Activated CD4-positive, alpha-beta T cell treated with anti-CD3 and anti-CD28 coated beads, Interleukin-2, amount 10 ng/mL, durations not matched to agents 24 days and 14 days (primary cell): ENCODE measurements at regions of chr9 and their contacts with region 1.

Region 1: DNA sequence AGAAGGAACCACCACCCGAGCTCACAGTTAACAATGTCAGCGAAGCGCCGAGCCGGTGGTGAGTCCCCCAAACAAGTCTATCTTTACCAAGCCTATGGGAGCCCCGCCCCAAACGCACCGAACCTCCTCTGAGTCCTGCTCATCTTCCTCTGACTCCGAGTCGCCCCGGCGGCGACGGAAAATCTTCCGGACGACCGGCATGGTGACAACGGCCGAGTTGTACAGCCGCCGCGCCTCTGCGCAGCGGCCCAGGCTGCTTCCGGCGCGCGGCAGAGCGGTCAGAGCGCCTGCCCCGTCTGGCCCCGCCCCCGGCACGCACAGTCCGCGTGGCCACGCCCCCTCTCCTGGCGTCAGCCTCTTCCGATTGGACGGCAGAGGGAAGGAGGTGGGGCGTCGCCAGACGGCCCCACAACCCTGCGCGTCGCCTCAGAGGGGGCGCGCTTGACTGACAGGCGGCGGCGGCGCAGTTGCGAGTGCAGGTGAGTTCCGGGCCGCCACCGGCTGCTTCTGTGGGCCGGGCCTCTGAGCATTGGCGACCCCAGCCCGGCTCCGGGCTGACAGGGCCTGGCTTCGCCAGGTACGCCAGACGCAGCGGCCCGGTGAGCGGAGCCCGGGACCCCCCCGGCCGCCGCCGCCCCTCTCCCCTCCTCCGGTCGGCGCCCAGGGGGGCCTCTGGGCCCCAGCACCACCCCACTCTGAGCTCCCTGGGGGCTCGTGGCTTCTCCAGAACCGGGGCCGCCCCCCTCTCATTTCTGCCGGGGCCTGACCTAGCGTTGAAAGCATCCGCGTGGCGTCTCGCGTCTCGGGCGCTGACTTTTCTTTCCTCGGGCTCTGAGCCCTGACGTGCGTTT is at the starts of genes C9orf78 and USP20:
- DNase-seq: peak; percentile 99
- H3K4me3 Mint-ChIP-seq: peak within 1 kb of the TSS; percentile 93
- H3K27ac Mint-ChIP-seq: peak within 1 kb of the TSS; percentile 95
- H3K4me1 Mint-ChIP-seq: peaks cover 50% of the 10 kb centered on the region
- H3K27me3 Mint-ChIP-seq: no peaks in the 10 kb centered on the region
- total RNA-seq, gene C9orf78: 59.9 and 60.9 TPM in 2 replicates
- total RNA-seq, gene USP20: 44.3 and 47.2 TPM in 2 replicates

Region 2: DNA sequence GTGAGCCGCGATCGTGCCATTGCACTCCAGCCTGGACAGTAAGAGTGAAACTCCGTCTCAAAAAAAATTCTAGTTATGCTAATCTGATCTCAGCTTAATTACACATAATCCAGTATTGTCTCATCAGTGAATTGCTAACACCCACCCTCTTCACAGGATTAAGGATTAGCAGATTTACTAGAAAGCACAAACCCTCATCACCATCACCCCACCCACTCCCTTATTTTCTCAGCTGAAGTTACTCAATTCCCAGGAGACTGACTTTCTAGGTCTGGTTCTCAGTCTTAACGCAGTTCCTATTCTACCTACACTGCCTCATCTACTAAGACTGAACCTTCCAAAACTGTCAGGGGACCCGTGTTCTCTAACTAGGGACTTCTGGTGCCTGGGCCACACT is 23.3 kb before region 1 on chr9:
- intact Hi-C with region 1: no loop called
- DNase-seq: no peak
- H3K4me3 Mint-ChIP-seq: no peak overlapping the region
- H3K27ac Mint-ChIP-seq: no peak overlapping the region
- H3K4me1 Mint-ChIP-seq: peaks cover 4% of the 10 kb centered on the region
- H3K27me3 Mint-ChIP-seq: no peaks in the 10 kb centered on the region

Region 3: DNA sequence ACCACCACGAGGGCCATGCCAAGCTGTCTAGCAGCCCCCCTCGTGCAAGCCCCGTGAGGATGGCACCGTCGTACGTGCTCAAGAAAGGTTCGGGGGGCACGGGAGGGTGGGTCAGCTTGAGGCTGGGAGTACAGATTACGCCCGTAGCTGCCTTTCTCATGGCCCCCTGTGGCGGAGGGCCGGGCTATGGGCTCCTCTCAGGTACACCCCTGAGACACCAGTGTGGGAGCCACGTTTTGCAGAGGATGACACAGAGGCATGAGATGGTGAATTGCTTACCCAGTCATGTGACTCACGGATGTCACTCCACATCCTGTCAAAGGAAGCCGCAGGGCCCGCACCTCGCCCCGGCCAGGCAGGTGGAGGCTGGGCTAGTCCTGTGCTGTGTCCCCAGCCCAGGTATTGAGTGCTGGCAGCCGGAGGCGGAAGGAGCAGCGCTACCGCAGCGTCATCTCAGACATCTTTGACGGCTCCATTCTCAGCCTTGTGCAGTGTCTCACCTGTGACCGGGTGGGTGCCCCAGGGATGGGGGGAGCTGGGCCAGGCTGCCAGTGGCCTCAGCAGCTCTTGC is 33.8 kb after region 1 on chr9:
- intact Hi-C with region 1: loop called (anchors 1 kb)
- DNase-seq: peak; percentile 96
- H3K4me3 Mint-ChIP-seq: peak overlapping the region; percentile 61
- H3K27ac Mint-ChIP-seq: peak overlapping the region; percentile 92
- H3K4me1 Mint-ChIP-seq: peaks cover 56% of the 10 kb centered on the region
- H3K27me3 Mint-ChIP-seq: no peaks in the 10 kb centered on the region

Region 4: DNA sequence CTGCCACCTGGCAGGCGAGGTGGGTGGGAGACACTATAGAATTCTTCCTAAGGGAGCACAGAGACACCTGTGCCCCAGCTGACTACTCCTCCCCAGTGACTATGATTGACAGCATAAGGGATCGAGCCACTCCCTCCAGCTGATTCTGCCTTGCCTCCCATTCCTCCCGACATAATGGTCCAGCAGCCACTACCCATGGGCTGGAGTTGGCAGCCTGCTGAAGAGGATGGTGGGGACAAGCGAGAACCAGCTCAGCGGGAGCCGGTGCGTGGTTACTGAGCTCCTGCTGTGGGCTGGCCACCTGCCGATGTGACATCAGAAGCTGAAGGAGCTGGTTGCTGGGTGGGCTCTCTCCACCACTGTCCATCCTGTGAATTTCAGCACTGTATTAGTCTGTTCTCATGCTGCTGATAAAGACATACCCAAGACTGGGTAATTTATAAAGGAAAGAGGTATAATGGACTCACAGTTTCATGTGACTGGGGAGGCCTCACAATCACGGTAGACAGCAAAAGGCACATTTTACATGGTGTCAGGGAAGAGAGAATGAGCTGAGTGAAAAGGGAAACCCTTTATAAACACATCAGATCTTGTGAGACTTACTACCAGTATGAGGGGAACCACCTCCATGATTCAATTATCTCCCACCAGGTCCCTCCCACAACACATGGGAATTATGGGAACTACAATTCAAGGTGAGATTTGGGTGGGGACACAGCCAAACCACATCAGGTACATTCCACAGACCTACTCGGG is 324.8 kb after region 1 on chr9:
- intact Hi-C with region 1: no loop called
- DNase-seq: no peak
- H3K4me3 Mint-ChIP-seq: no peak overlapping the region
- H3K27ac Mint-ChIP-seq: no peak overlapping the region
- H3K4me1 Mint-ChIP-seq: no peaks in the 10 kb centered on the region
- H3K27me3 Mint-ChIP-seq: peaks cover 2% of the 10 kb centered on the region